Sciatic nerve (tissue), 2 donors: ENCODE measurements at regions of chr1 and their contacts with region 1.

Region 1: GRCh38 chr1:168786476-168787330 is 57.7 kb upstream of the DPT start:
- DNase-seq: no peak
- ATAC-seq: no peak

Region 2: DNA sequence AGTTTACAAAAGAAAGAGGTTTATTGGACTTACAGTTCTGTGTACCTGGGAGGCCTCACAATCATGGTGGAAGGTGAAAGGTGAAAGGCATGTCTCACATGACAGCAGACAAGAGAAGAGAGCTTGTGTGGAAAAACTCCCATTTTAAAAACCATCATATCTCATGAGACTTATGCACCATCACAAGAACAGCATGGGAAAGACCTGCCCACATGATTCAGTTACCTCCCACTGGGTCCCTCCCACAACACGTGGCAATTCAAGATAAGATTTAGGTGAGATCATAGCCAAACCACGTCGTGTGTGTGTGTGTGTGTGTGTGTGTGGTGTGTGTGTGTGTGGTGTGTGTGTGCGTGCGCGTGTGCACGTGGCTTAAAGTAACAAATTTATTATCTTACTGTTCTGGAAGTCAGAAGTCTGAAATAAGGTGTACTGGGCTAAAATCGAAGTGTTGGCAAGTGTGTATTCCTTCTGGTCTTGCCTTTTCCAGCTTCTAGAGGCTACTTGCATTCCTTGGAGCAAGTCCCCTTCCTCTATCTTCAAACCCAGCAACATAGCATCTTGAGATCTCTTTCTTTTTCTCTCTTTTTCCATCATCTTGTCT is 801.7 kb before region 1 on chr1:
- intact Hi-C with region 1: no loop called
- DNase-seq: no peak
- ATAC-seq: no peak

Region 3: DNA sequence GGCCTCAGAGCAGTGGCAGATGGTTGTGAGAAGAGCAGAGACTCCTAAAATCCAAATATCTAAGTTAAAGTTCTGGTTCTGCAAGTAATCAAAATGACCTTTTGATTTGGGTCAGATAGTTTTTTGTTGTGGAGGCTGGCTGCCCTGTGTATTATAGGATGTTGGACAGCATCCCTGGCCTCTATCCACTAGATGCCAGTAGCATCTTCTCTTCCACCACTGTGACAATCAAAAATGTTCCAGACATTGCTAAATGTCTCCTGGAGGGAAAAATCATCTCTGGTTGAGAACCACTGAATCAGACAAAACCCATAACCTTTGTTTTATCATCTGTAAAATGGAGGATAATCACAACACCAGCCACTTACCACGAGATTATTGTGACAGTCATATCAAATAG is 51.8 kb before region 1 on chr1:
- intact Hi-C with region 1: loop called (anchors 2 kb)
- DNase-seq: no peak
- ATAC-seq: no peak